BJ (cell line): ENCODE measurements at regions of chr13 and their contacts with region 1.

Region 1: DNA sequence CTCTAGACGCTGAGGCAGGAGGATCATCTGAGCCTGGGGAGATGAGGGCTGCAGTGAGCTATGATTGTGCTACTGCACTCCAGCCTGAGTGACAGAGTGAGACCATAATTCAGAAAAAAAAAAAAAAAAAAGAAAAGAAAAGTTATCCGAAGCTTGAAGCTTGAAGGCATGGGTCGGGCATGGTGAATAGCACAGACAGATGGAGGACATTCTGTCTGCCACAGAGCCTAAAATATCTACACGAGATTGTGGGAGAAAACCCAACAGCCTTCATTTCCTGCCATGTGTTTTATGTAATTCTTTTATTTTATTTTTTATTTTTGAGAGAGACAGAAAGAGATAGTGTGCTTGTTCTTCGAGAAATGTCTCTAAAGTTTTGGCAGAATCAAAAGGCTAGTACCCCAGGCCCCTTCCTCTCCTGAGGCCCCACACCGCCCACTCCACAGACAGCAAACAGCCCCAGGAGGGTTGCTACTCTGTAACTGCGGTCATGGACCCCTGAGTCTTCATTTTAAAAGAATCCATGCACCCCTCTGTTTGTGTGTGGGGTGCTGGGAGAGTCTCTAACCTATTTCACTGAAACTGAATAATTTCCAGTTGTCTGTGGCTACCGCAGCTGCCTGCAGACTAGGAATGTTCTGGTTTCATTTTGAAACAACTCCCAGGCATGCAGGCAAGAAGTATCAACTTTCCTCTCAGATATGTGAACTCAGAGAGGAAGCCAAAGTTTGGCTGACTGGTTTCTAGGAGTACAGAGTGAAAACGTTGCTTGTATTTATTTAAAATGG is 38.4 kb upstream of the RCBTB2 start:
- DNase-seq: no peak
- H3K4me3 ChIP-seq: no peak overlapping the region
- H3K27me3 ChIP-seq: no peaks in the 10 kb centered on the region
- CTCF ChIP-seq: no peak

Region 2: GRCh38 chr13:48534911-48535501 is 36.3 kb before region 1 on chr13:
- CTCF ChIA-PET with region 1: no interaction called
- POLR2A ChIA-PET with region 1: interaction called, 14 read pairs
- DNase-seq: no peak
- H3K4me3 ChIP-seq: no peak overlapping the region
- H3K27me3 ChIP-seq: no peaks in the 10 kb centered on the region
- CTCF ChIP-seq: no peak